ENCODE measurements at regions of chr5 and their contacts with region 1.

Region 1: DNA sequence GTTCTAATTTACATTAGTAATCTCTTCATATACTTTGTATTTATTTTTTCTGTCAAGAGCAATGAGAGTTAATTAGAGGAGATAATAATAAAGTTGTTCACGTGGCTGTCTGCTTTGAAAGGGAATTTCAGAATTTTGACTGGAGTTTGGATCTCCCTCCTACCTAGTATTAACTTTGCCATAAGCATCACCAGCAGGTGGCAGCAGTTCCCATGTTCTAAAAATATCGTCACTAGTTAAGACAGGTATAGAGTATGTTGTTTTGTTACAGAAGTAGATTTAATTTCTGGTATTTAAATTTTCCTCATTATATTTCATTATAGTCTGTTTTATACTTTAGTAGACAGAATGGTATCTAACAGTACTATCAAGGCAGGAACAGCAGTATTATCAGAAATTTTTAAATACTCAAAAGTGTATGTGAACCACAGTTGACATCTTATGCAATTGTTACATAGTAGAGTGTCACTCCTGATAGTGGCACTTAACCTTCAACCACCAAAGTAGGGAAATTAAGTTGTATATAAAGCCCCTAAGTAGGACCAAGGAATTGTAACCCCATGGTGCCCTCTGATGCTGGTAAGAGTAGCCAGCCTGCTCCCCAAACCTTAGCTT is 20.4 kb downstream of the GNPDA1 start:
- DNase-seq: no peak
- H3K4me3 ChIP-seq: no peak overlapping the region
- H3K27me3 ChIP-seq: no peaks in the 10 kb centered on the region
- CTCF ChIP-seq: peak; percentile 72

Region 2: DNA sequence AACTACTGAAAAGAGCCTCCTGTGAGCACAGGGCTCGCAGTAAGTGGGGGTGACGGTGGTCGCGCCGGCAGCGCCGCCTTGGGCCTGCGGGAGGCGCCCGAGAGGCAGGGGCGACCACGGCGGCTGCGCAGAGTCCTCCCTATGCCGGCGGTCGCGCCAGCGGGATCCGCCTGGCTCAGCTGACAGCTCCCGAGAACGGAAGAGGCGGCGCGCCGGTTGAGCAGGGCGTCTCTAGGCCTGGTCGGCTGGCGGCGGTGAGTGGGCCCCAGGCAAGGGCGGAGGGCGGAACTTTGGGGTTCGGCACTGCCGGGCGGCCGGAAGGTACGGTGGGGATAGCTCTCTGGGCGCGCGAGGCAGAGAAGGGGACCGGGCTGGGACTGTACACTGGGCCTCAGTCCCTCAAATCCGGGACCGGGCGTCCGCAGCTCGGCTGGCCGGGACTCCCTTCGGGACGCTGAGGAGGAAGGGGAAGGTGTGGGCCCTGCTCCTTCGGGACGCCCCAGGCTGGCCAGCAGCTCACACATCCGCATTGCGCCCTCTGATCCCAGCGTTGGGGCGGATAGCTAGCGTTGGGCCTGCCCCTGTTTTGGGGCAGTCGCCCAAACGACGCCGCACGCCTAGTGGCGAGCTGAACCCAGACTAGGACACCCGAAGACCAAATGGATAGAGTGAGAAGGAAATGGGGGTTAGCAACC is 23.4 kb before region 1 on chr5 and contains the start of gene RNF14:
- CTCF ChIA-PET with region 1: interaction called, 16 read pairs
- POLR2A ChIA-PET with region 1: no interaction called
- DNase-seq: peak; percentile 59
- H3K4me3 ChIP-seq: peak within 1 kb of the TSS; percentile 69
- H3K27me3 ChIP-seq: no peaks in the 10 kb centered on the region
- CTCF ChIP-seq: peak; percentile 83
- polyA plus RNA-seq, gene RNF14: 27.2 and 33.1 TPM in 2 replicates

Region 3: GRCh38 chr5:141976176-141976575 is 16.3 kb before region 1 on chr5:
- CTCF ChIA-PET with region 1: interaction called, 23 read pairs
- POLR2A ChIA-PET with region 1: no interaction called
- DNase-seq: no peak
- H3K4me3 ChIP-seq: no peak overlapping the region
- H3K27me3 ChIP-seq: no peaks in the 10 kb centered on the region
- CTCF ChIP-seq: no peak

Region 4: GRCh38 chr5:142046191-142046590 is 53.7 kb after region 1 on chr5:
- CTCF ChIA-PET with region 1: no interaction called
- POLR2A ChIA-PET with region 1: no interaction called
- DNase-seq: no peak
- H3K4me3 ChIP-seq: no peak overlapping the region
- H3K27me3 ChIP-seq: 0 out of 2 replicates have a peak, but pooled peaks cover 2% of the 10 kb centered on the region
- CTCF ChIP-seq: no peak

Measured in BJ (cell line).